Activated CD4-positive, alpha-beta memory T cell treated with anti-CD3 and anti-CD28 coated beads, Interleukin-2, amount 10 ng/mL, durations not matched to agents 7 days and 5 days (primary cell): ENCODE measurements at regions of chr22 and their contacts with region 1.

Region 1: DNA sequence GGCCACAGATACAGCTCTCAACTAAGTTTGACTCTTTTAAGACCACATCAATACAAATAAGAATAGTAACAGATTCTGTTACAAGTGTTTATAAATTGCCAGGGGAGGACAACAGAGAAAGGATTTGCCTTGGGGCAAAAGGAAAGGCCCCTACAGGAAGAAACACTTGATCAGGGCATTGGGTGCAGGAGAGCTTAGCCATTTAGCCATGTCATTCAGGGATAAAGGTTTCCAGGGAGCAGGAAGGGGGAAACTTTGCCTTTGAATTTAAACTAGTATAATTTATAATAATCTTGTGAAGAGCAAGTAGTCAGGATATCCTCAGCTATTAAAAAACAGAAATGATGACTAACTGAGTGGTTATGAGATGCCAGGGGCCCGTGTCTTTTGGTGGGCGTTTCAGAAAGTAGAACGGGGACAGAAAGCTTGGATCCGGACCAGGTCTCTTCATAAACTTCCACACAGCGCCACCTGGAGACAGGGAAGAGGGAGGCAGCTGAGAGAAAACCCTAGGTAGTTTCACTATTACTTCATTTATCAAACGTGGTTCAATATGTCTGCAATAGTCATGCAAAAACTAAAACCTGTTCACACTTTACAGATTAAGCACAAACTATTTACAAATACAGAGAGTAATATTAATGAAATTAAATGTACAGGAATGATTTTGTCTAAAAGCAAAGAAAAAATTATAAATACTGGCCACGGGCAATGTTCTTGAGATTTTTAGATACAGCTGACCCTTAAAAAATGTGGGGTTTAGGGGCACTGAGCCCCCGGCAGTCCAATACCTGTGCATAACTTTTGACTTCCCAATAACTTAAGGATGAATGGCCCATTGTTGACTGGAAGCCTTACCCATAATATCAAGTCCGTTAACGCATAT is 11.0 kb upstream of the SLC5A4 start:
- DNase-seq: peak; percentile 76
- H3K4me3 Mint-ChIP-seq: no peak overlapping the region
- H3K27ac Mint-ChIP-seq: no peak overlapping the region
- H3K4me1 Mint-ChIP-seq: peaks cover 7% of the 10 kb centered on the region
- H3K27me3 Mint-ChIP-seq: peaks cover 5% of the 10 kb centered on the region

Region 2: DNA sequence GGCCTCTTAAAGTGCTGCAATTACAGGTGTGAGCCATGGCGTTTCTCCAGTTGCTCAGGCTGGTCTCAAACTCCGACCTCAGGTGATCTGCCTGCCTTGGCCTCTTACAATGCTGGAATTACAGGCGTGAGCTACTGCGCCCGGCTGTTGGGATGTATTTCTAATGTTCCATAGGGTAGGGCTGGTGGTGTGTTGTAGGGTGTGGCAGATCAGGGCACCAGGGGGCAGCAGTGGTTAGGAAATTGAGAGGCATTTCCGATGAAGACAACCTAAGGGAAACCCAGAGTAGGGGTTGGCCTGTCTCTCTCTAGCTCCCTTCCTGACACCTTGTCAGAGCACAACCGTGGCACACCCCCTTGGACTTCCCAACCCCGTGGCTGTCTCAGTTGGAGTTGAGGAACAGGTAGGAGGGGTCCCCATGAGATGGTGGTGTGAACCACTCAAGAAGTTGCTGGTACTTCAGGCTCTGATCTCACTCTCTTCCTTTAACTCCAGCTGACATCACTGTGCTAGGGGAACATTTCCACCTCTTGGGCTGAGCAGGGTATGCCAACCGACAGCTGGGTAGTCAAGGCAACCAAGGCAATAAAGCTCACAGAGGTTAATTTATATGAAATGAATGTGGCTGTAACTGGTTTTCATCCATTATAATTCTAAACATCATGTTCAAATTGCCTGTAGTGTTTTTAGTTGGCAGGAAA is 288.8 kb before region 1 on chr22:
- CTCF ChIA-PET with region 1: interaction called, 18 read pairs
- POLR2A ChIA-PET with region 1: no interaction called
- DNase-seq: peak; percentile 84
- H3K4me3 Mint-ChIP-seq: no peak overlapping the region
- H3K27ac Mint-ChIP-seq: no peak overlapping the region
- H3K4me1 Mint-ChIP-seq: peaks cover 4% of the 10 kb centered on the region
- H3K27me3 Mint-ChIP-seq: peaks cover 16% of the 10 kb centered on the region

Region 3: GRCh38 chr22:32142600-32142999 is 123.5 kb before region 1 on chr22:
- CTCF ChIA-PET with region 1: interaction called, 19 read pairs
- POLR2A ChIA-PET with region 1: no interaction called
- DNase-seq: peak; percentile 49
- H3K4me3 Mint-ChIP-seq: peak overlapping the region; percentile 16
- H3K27ac Mint-ChIP-seq: peak overlapping the region; percentile 86
- H3K4me1 Mint-ChIP-seq: peaks cover 62% of the 10 kb centered on the region
- H3K27me3 Mint-ChIP-seq: no peaks in the 10 kb centered on the region

Region 4: GRCh38 chr22:32202539-32203180 is 63.5 kb before region 1 on chr22:
- CTCF ChIA-PET with region 1: interaction called, 18 read pairs
- POLR2A ChIA-PET with region 1: no interaction called
- DNase-seq: peak; percentile 65
- H3K4me3 Mint-ChIP-seq: peak overlapping the region; percentile 74
- H3K27ac Mint-ChIP-seq: peak overlapping the region; percentile 12
- H3K4me1 Mint-ChIP-seq: peaks cover 72% of the 10 kb centered on the region
- H3K27me3 Mint-ChIP-seq: peaks cover 17% of the 10 kb centered on the region

Region 5: DNA sequence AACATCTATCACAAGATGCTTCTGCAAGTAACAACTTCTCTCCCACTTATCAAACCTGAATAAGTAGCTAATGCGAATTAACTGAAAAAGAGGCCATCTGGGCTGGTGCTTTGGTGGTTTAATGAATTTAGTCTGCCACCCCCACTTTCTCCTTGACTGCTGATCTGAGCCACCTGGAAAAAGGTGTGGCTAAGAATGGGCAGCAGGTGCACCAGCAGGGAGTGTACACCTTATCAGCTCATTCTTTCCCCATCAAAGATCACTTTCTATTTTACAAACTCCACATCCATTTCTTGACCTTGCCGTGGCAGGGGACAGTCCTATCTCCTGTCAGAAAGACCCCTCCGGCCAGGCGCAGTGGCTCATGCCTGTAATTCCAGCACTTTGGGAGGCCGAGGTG is 98.1 kb after region 1 on chr22:
- CTCF ChIA-PET with region 1: no interaction called
- POLR2A ChIA-PET with region 1: no interaction called
- DNase-seq: no peak
- H3K4me3 Mint-ChIP-seq: no peak overlapping the region
- H3K27ac Mint-ChIP-seq: no peak overlapping the region
- H3K4me1 Mint-ChIP-seq: no peaks in the 10 kb centered on the region
- H3K27me3 Mint-ChIP-seq: peaks cover 2% of the 10 kb centered on the region